ENCODE measurements at regions of chrX and their contacts with region 1.

Region 1: DNA sequence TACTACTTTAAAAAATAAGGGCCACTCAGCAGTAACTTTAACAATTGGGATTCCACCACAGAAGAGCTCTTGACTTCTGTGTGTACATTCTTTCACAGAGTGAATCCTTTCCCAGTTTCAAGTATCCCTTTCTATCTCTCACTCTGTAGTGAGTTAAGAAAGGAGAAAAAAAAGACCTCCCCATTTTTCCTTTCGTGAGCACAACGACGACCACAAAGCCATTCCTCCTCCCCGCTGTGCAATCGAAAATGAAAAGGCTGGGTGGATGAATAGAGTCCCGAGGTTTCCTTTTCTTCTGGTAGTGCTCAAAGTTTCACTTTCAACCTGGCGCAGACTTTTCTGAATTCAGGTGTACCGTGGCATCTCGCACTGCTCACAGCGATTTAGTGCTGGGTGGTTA is 58.0 kb downstream of the TAB3 start:
- DNase-seq: peak; percentile 37
- H3K4me3 Mint-ChIP-seq: peak overlapping the region; percentile 60
- H3K27ac Mint-ChIP-seq: peak overlapping the region; percentile 67
- H3K4me1 Mint-ChIP-seq: peaks cover 26% of the 10 kb centered on the region
- H3K27me3 Mint-ChIP-seq: peaks cover 1% of the 10 kb centered on the region

Region 2: DNA sequence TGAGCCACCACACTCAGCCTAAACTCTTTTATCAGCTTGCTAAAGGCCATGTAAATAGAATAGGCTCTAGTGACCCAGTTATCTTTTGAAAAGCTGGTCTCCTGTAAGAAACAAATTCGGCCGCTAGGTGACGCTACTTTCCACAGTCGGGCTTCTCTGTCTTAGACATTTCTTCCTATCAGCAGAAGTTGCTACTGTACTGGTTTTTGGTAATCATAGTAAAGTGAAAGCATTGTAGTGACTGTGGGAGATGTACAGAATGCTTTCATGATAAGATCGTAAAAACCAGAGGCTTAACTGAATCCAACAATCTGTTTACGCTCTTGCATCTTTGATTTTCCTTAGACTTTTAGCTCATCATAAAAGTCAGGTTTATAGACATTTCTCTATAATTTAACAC is 95.2 kb before region 1 on chrX:
- intact Hi-C with region 1: loop called (anchors 5 kb)
- DNase-seq: peak; percentile 64
- H3K4me3 Mint-ChIP-seq: no peak overlapping the region
- H3K27ac Mint-ChIP-seq: no peak overlapping the region
- H3K4me1 Mint-ChIP-seq: peaks cover 11% of the 10 kb centered on the region
- H3K27me3 Mint-ChIP-seq: no peaks in the 10 kb centered on the region

Measured in activated T-helper 1 cell treated with anti-CD3 and anti-CD28 coated beads, Interleukin-12 subunit alpha, Interleukin-12 subunit beta, Interleukin-2, Interleukin-4 antibody, amounts not matched to agents 30 ng/mL and 10 ng/mL and 1 ng/mL, durations not matched to agents 14 hours and 24 hours and 36 hours (primary cell).